ENCODE measurements at regions of chr1 and their contacts with region 1.

Region 1: DNA sequence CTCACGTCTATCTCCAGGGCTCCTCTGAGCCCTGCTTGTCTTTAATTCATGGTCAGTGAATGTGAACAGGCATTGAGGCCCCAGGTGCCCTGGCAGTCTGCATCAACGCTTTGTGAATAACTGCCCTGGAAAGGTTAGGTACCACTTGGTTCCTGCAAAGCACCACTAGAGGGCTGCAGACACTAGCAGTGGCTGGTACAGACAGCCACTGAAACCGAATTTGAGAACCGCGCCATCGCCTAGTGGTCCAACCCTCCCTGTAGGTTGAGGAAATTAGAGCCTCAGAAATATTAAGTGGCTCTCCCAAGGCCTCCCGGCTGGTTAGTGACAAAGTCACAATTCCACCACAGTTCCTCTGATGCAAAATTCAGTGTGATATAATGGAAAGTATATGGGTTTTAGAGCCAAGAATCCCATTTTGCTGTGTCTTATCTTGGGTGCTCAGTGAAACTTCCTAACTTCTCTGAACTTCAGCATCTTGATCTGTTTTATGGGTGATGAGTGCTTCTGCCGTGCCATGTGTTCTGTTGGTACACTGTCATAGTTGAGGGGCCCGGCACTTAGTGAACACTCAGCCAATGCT is 46.2 kb upstream of the BCL9 start:
- DNase-seq: peak; percentile 78
- H3K4me3 Mint-ChIP-seq: no peak overlapping the region
- H3K27ac Mint-ChIP-seq: no peak overlapping the region
- H3K4me1 Mint-ChIP-seq: no peaks in the 10 kb centered on the region
- H3K27me3 Mint-ChIP-seq: no peaks in the 10 kb centered on the region
- CTCF ChIP-seq: peak; percentile 84

Region 2: DNA sequence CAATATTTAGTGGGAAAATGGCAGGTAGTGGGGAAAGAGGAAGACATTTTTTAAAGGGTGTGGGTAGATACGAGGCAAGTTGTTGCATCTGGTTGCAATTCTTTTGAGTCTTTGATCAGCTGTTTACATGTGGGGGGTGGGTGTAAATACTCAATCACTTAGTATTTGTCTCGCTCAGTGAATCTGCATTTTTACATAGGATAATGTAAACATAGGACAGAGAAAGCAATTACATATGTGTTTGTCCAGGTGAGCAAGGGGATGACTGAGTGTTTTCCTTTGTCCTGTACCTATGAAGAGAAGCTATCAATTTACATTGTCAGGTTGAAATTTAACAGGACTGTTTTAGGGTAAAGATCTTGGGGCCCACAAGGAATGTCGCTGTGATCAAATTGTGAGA is 401.7 kb before region 1 on chr1:
- CTCF ChIA-PET with region 1: no interaction called
- intact Hi-C with region 1: no loop called
- DNase-seq: no peak
- H3K4me3 Mint-ChIP-seq: no peak overlapping the region
- H3K27ac Mint-ChIP-seq: no peak overlapping the region
- H3K4me1 Mint-ChIP-seq: peaks cover 8% of the 10 kb centered on the region
- H3K27me3 Mint-ChIP-seq: peaks cover 42% of the 10 kb centered on the region
- CTCF ChIP-seq: no peak

Region 3: DNA sequence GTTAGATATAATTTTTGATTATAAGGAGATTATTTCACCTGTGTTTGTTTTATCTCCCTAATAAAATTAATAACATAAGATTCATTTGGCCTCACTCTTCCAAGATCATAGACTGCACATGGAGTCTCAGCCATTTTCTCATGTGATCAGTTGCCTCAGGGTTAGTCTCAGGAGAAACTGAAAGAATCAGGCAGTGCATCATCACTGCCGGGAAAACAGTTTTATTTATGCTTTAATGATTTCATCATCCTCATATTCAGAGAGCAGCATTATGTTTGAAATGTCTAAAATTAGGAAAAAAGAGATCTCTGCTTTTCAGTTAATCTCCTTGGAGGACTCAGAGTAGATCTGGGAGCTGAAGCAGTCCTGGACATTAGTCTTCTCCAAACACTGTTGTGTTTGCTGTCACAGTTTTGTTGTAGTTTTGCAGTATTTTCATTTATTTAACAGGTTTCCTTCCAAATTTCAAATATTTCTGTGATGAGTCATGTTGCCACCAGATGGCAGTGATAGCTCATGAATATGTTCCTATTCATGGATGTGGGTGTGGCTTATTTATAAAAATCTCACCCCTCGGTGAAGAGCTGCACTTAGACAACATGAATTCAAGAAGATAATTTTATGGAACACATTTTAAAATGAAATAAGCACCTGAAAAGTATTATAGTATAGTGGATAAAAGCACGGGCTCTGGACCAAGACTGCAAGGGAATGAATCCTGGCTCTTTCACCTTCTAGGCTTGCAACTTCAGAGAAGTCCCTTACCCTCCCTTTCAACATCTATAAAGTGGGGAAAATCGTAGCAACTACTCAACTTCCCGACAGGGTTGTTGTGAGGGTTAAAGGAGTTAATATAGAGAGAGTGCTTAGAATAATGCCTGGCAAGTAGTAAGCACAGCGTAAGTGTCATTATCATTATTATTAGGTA is 221.4 kb before region 1 on chr1:
- CTCF ChIA-PET with region 1: interaction called, 8 read pairs
- intact Hi-C with region 1: loop called (anchors 2 kb)
- DNase-seq: peak; percentile 43
- H3K4me3 Mint-ChIP-seq: no peak overlapping the region
- H3K27ac Mint-ChIP-seq: no peak overlapping the region
- H3K4me1 Mint-ChIP-seq: peaks cover 9% of the 10 kb centered on the region
- H3K27me3 Mint-ChIP-seq: no peaks in the 10 kb centered on the region
- CTCF ChIP-seq: no peak

Region 4: DNA sequence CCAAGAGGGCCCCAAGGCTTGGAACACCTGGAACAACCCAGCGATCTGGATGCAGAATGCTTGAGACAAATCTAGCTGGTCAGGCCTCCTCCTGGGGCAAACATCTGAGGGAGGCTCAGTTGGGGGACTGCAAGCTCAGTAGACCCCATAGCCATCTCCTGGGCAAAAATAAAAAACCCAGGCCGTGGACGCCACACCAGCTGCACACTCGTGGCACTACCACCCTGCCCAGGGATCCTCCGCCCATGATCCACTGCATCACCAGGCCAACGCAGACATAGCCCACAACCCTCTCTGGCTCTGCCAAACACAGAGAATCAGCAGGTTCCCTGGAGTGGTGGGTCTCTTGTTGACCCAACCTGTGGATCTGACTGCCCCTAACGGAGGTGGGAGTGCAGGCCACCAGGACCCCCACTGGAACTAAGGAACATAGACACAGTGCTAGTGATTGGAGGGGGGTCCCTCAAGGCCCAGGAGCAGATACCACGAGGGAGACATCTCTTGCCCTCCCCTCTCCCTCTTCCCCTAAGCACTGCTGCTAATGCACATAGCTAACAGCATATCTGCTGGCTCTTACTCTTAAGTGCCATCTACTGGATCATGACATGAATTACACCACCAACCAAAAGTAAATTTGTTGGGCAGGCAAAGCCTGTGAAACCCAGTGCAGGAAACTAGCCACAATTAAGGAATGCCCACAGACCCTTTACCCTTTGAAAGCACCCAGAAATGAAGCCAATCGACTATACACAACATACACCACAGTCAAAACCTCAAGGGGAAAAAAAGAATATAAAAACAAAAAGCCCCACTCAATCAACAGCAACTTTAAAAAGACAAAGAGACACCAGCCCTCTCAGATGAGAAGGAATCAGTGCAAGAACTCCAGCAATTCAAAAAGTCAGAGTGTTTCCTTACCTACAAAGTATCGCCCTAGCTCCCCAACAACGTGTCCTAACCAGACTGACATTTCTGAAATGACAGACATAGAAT is 105.3 kb before region 1 on chr1:
- CTCF ChIA-PET with region 1: interaction called, 4 read pairs
- intact Hi-C with region 1: loop called (anchors 5 kb)
- DNase-seq: peak; percentile 32
- H3K4me3 Mint-ChIP-seq: no peak overlapping the region
- H3K27ac Mint-ChIP-seq: no peak overlapping the region
- H3K4me1 Mint-ChIP-seq: no peaks in the 10 kb centered on the region
- H3K27me3 Mint-ChIP-seq: peaks cover 14% of the 10 kb centered on the region
- CTCF ChIP-seq: peak; percentile 68

Region 5: DNA sequence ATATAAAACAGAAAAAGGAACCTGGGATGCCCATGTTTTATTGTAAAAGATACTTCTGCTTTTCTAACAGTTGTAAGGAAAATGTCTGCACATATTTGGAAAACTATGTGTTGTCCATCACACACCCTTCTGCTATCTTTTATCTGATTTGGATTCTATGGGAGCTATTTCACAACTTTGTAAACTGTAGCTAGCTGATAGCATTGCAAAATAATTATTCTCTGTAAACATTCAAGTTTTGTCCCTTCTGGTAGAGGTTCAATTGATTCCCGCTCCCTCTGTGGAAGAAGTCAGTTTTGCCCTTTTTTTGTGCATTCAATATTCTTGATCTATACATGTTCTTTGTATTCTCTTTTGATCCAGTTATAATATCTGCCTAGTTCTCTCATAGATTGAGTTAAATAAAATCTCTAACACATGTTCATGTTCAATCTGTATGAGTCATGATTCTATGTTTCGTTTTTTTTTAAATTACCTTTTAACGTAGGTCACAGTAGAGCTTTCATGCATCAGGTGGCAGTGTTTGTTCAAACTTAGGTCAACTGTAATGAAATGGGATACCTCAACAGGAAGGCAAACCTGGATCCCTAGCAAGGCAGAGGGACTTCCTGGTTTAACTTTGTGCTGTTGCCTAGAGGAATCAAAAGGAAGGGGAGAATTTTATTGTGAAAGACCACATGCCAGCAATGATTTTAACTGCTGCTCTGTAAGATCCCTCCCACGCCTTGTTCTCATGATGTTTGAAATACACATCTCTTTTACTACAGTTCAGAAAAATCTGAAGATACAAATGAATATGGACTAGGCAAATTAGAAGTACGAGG is 20.2 kb after region 1 on chr1:
- CTCF ChIA-PET with region 1: no interaction called
- intact Hi-C with region 1: loop called (anchors 2 kb)
- DNase-seq: peak; percentile 73
- H3K4me3 Mint-ChIP-seq: no peak overlapping the region
- H3K27ac Mint-ChIP-seq: peak overlapping the region; percentile 4
- H3K4me1 Mint-ChIP-seq: peaks cover 23% of the 10 kb centered on the region
- H3K27me3 Mint-ChIP-seq: no peaks in the 10 kb centered on the region
- CTCF ChIP-seq: peak; percentile 25

Region 6: GRCh38 chr1:147613506-147613905 is 118.4 kb after region 1 on chr1:
- CTCF ChIA-PET with region 1: no interaction called
- intact Hi-C with region 1: no loop called
- DNase-seq: no peak
- H3K4me3 Mint-ChIP-seq: no peak overlapping the region
- H3K27ac Mint-ChIP-seq: no peak overlapping the region
- H3K4me1 Mint-ChIP-seq: peaks cover 10% of the 10 kb centered on the region
- H3K27me3 Mint-ChIP-seq: no peaks in the 10 kb centered on the region
- CTCF ChIP-seq: no peak

Region 7: DNA sequence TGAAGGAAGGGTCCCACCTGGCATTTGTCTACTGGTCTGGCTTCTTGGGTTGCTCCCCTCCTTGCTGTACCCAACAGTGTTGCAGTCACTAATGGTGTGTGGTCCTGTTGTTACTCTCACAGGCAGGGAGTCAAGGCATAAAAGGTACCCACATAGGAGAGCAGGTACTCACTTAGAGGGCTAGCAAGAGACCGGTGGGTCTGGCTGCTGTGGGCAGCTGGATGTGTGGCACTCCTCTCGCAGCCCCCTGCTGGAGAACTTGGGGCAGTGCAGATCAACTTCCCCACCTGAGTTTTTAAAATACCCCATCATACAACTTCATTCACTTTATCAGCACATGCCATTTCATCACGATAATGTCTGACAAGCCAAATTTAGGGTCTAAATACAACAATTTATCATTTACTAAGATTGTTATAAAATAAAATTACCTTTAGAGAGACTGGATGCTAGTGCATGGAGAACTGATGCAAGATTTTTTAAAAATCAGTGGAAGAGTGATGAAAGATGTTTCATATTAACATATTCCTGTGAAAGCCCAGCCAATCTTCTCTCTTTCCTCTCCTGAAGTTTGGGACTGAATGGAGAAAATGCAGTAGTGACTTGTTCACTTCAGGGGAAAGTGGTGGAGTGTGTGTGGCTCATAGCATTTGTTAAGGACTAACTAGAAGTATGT is 132.5 kb after region 1 on chr1:
- CTCF ChIA-PET with region 1: no interaction called
- intact Hi-C with region 1: loop called (anchors 1 kb)
- DNase-seq: peak; percentile 74
- H3K4me3 Mint-ChIP-seq: no peak overlapping the region
- H3K27ac Mint-ChIP-seq: no peak overlapping the region
- H3K4me1 Mint-ChIP-seq: no peaks in the 10 kb centered on the region
- H3K27me3 Mint-ChIP-seq: no peaks in the 10 kb centered on the region
- CTCF ChIP-seq: peak; percentile 94

Region 8: DNA sequence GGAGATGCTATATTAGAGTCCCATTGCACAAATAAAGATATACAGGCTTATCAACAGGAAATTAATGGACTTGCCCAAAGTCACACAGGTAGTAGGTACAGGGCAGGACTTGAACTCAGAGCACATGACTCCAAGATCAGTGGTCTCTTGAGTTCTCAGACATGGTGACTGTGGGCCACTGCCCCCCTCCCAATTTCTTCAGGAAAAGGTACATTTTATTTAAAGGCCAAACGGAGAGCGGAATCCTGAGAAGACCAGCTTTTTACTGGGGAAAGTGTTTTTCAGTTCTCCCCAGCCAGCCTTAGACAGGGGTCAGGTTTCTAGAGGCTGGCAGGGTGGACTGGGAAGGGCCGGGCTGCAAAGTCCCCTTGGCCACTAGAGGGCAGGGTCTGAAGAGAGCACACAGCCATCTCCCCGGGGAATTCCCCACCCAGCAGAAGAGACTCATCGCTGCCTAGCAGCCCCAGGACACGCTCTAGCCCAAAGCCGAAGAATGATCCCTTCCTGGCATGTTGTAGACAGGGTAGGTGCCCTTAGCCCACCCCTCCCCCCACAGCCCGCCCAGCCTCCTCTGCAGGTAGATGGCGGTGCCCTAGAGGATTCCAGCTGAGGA is 145.6 kb after region 1 on chr1:
- CTCF ChIA-PET with region 1: no interaction called
- intact Hi-C with region 1: loop called (anchors 1 kb)
- DNase-seq: peak; percentile 93
- H3K4me3 Mint-ChIP-seq: no peak overlapping the region
- H3K27ac Mint-ChIP-seq: no peak overlapping the region
- H3K4me1 Mint-ChIP-seq: peaks cover 20% of the 10 kb centered on the region
- H3K27me3 Mint-ChIP-seq: no peaks in the 10 kb centered on the region
- CTCF ChIP-seq: peak; percentile 95

Measured in Calu3 (cell line).